Colonic mucosa (tissue), 4 donors: ENCODE measurements at regions of chr3 and their contacts with region 1.

Region 1: DNA sequence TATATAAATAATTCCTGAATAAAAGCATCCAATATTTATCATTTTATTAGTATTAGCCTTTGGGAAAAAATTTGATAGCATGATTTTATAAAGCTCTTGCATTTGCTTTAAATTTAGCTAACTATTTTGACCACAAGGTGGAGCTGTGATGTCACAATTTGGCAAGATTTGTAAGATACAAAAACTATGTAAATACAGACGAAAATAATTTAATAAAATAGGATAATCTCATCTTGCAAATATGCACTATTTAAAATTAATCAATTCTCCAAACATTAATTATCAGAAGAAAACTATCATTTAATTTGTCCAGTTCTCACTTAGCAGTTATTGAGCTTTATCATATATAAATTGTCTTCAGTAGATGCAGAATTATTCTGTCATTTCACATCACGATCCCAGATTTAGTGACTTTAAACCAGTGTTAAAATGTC is 95.4 kb downstream of the PLOD2 start:
- DNase-seq: peak; percentile 35
- H3K4me3 ChIP-seq: no peak overlapping the region
- H3K27ac ChIP-seq: no peak overlapping the region
- H3K4me1 ChIP-seq: no peaks in the 10 kb centered on the region
- H3K27me3 ChIP-seq: no peaks in the 10 kb centered on the region
- CTCF ChIP-seq: peak; percentile 43

Region 2: GRCh38 chr3:146189519-146190173 is 124.1 kb after region 1 on chr3:
- intact Hi-C with region 1: loop called (anchors 5 kb)
- DNase-seq: no peak
- H3K4me3 ChIP-seq: no peak overlapping the region
- H3K27ac ChIP-seq: no peak overlapping the region
- H3K4me1 ChIP-seq: no peaks in the 10 kb centered on the region
- H3K27me3 ChIP-seq: no peaks in the 10 kb centered on the region
- CTCF ChIP-seq: peak; percentile 79

Region 3: GRCh38 chr3:146326670-146327543 is 261.3 kb after region 1 on chr3:
- intact Hi-C with region 1: loop called (anchors 5 kb)
- DNase-seq: peak; percentile 45
- H3K4me3 ChIP-seq: no peak overlapping the region
- H3K27ac ChIP-seq: no peak overlapping the region
- H3K4me1 ChIP-seq: no peaks in the 10 kb centered on the region
- H3K27me3 ChIP-seq: no peaks in the 10 kb centered on the region
- CTCF ChIP-seq: peak; percentile 55

Region 4: GRCh38 chr3:146895026-146895749 is 829.6 kb after region 1 on chr3:
- intact Hi-C with region 1: no loop called
- DNase-seq: no peak
- H3K4me3 ChIP-seq: no peak overlapping the region
- H3K27ac ChIP-seq: no peak overlapping the region
- H3K4me1 ChIP-seq: no peaks in the 10 kb centered on the region
- H3K27me3 ChIP-seq: no peaks in the 10 kb centered on the region
- CTCF ChIP-seq: no peak

Region 5: DNA sequence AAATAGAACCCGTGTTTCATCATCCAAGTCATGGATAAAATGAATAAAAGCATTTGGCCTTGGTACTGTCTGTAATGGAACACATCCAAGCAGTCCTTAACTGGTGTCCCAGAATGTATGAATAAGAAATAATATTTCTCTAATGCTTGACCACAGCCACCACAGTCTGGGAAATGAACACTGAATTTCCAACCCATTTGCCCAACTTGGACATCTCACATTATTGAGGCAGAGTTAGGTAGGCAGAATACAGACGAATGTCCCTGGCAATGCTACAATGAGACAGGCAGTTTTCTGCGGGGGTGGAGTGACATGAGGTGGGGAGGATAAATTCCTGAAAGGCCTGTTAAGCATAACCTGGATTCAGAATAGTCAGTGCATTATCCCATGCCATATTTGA is 1589.2 kb after region 1 on chr3:
- intact Hi-C with region 1: no loop called
- DNase-seq: no peak
- H3K4me3 ChIP-seq: no peak overlapping the region
- H3K27ac ChIP-seq: no peak overlapping the region
- H3K4me1 ChIP-seq: no peaks in the 10 kb centered on the region
- H3K27me3 ChIP-seq: no peaks in the 10 kb centered on the region
- CTCF ChIP-seq: no peak